ENCODE measurements at regions of chr7 and their contacts with region 1.

Region 1: DNA sequence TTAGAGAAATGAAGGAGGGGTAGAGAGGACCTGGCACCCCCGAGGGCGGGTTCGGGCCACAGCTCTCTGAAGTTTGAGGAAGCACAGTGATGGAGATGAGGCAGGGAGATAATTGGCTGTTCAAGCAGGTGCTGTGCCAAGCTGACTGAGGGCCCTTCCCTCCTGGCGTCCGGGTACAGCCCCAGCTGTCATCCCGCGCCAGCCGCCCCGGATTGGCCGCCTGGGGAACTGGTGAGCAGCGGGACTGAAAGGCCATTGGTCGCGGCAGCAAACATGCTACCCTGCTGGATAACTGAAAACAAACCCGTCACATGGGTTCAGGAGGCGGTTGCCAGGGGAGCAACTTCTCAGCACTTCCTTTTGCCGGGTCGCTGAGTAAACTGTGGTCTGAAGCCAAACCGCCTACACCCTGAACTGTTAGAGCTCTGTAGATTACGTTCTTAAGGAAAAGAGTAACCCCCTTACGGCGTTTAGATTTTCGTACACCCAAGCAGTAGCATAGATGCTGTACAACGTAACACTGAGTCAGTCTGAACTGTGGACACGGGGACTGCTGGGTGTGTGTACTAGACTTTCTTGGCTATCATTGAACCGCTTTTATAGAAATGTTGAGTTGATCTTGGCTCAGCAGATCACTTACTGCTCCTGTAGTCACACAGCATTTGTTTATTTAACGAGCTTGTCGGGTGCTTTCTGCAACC is 1.3 kb downstream of the INSIG1 start:
- DNase-seq: peak; percentile 93 to 96
- H3K4me3 ChIP-seq: peak overlapping the region; percentile 88 to 97
- H3K27ac ChIP-seq: peak overlapping the region; percentile 91 to 94
- H3K4me1 ChIP-seq: peaks cover 3 to 5% of the 10 kb centered on the region in 2 donors
- H3K27me3 ChIP-seq: no peaks in the 10 kb centered on the region
- CTCF ChIP-seq: no peak

Region 2: GRCh38 chr7:154406312-154406711 is 892.7 kb before region 1 on chr7:
- intact Hi-C with region 1: no loop called
- DNase-seq: no peak
- H3K4me3 ChIP-seq: no peak overlapping the region
- H3K27ac ChIP-seq: no peak overlapping the region
- H3K4me1 ChIP-seq: no peaks in the 10 kb centered on the region
- H3K27me3 ChIP-seq: no peaks in the 10 kb centered on the region
- CTCF ChIP-seq: no peak

Region 3: GRCh38 chr7:155003376-155004214 is 295.4 kb before region 1 on chr7:
- intact Hi-C with region 1: loop called (anchors 2 kb)
- DNase-seq: peak; percentile 18 to 85
- H3K4me3 ChIP-seq: peak overlapping the region; percentile 80 to 91
- H3K27ac ChIP-seq: peak overlapping the region; percentile 78 to 84
- H3K4me1 ChIP-seq: no peaks in the 10 kb centered on the region
- H3K27me3 ChIP-seq: no peaks in the 10 kb centered on the region
- CTCF ChIP-seq: no peak

Region 4: GRCh38 chr7:155257482-155258225 is 41.3 kb before region 1 on chr7:
- intact Hi-C with region 1: loop called (anchors 1 kb)
- DNase-seq: peak; percentile 14 to 88
- H3K4me3 ChIP-seq: peak overlapping the region in 1 of 2 donors; percentile 48
- H3K27ac ChIP-seq: peak overlapping the region; percentile 68 to 71
- H3K4me1 ChIP-seq: peaks cover 4 to 19% of the 10 kb centered on the region in 2 donors
- H3K27me3 ChIP-seq: no peaks in the 10 kb centered on the region
- CTCF ChIP-seq: no peak

Region 5: DNA sequence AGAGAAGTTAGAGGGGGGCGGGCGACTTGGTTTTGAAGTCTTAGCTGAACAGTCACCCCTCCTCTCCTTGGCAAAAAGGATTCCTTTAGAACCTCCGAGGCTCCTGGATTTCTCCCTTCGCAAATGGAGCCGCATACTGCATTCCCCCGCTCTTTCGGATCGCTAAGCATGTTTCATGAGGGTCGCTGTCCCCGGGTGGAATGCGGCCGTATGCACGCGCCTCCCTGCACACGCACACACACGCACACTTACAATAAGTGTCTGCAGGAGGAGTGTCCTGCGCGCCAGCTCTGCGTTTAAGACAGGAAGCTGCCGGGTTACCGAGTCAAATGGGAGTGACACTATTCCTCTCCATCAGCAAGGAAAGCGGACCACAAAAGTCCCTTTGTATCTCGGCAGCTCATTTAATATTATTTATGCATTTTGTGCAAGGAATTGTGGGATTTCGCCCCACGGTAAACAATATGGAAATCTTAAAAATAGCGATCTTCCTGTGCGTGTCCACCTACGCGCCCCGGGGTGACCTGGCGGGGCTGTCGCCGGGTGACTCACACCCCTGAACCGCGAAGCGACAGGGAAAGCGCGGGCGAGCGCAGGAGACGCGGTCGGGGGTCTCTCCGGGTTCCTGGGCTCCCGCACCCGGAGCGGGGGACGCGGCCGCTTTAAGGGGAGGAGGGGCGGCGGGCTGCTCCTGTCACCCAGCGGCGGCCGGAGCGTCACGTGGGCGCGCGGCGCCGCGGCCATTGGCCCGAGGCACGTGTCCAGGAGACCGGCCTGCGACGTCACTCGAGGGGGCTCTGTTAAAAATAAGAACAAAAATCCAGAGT is 158.0 kb after region 1 on chr7:
- intact Hi-C with region 1: loop called (anchors 5 kb)
- DNase-seq: peak in 1 of 2 donors; percentile 71
- H3K4me3 ChIP-seq: peak overlapping the region; percentile 61 to 68
- H3K27ac ChIP-seq: no peak overlapping the region
- H3K4me1 ChIP-seq: peaks cover 17 to 20% of the 10 kb centered on the region in 2 donors
- H3K27me3 ChIP-seq: peaks cover 40% of the 10 kb centered on the region
- CTCF ChIP-seq: no peak

Region 6: GRCh38 chr7:156892821-156893706 is 1594.1 kb after region 1 on chr7 and contains the start of gene LMBR1:
- intact Hi-C with region 1: loop called (anchors 10 kb)
- DNase-seq: peak; percentile 63 to 96
- H3K4me3 ChIP-seq: peak within 1 kb of the TSS; percentile 84 to 94
- H3K27ac ChIP-seq: peak within 1 kb of the TSS; percentile 74 to 90
- H3K4me1 ChIP-seq: peaks cover 0 to 8% of the 10 kb centered on the region in 2 donors
- H3K27me3 ChIP-seq: no peaks in the 10 kb centered on the region
- CTCF ChIP-seq: peak; percentile 55 to 79 (median 60)
- total RNA-seq, gene LMBR1: 14.8 TPM